ENCODE measurements at regions of chrX and their contacts with region 1.

Region 1: DNA sequence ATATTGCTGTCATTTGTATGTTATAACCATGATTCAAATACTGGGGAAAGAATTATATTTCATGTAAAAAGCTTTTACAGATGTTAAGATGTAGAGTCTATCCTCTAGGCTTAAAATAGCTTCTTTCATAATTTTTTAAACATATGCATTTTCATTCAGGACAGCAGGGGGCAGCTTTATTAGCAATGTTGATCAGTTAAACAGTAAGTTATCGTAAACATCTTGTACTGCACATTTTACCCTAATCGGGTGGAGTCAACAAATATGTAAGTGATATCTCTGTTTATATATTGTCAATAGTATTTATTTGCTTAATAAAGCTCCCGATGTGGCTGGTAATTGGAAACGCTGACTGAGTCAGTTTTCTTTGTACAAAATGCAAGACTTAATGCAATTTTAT is 142.5 kb upstream of the MED14 start:
- DNase-seq: no peak
- ATAC-seq: peak; percentile 40
- H3K4me3 Mint-ChIP-seq: no peak overlapping the region
- H3K27ac Mint-ChIP-seq: no peak overlapping the region
- H3K4me1 Mint-ChIP-seq: no peaks in the 10 kb centered on the region
- H3K27me3 Mint-ChIP-seq: peaks cover 6% of the 10 kb centered on the region
- CTCF ChIP-seq: no peak

Region 2: GRCh38 chrX:41010188-41010846 is 132.4 kb after region 1 on chrX:
- CTCF ChIA-PET with region 1: no interaction called
- POLR2A ChIA-PET with region 1: interaction called, 3 read pairs
- intact Hi-C with region 1: loop called (anchors 10 kb)
- DNase-seq: peak; percentile 16
- ATAC-seq: peak; percentile 84
- H3K4me3 Mint-ChIP-seq: peak overlapping the region; percentile 78
- H3K27ac Mint-ChIP-seq: peak overlapping the region; percentile 73
- H3K4me1 Mint-ChIP-seq: peaks cover 14% of the 10 kb centered on the region
- H3K27me3 Mint-ChIP-seq: peaks cover 5% of the 10 kb centered on the region
- CTCF ChIP-seq: no peak

Measured in activated B cell treated with CpG ODN at 0.5 μM for 24 hours (primary cell).